Heart right ventricle (tissue), 16 donors: ENCODE measurements at regions of chr10 and their contacts with region 1.

Region 1: GRCh38 chr10:110007701-110008517 is at the start of gene ADD3:
- DNase-seq: peak; percentile 96 to 98
- ATAC-seq: peak; percentile 91 to 97 (median 93)
- H3K4me3 ChIP-seq: peak within 1 kb of the TSS; percentile 87 to 99 (median 96)
- H3K27ac ChIP-seq: peak within 1 kb of the TSS; percentile 89 to 99 (median 96)
- H3K4me1 ChIP-seq: peaks cover 0 to 78% (median 63%) of the 10 kb centered on the region in 9 donors
- H3K27me3 ChIP-seq: no peaks in the 10 kb centered on the region
- CTCF ChIP-seq: no peak
- total RNA-seq, gene ADD3: 62.5 to 106 (median 89.5) TPM

Region 2: GRCh38 chr10:109922976-109923921 is 84.7 kb before region 1 on chr10 and contains the start of gene XPNPEP1:
- intact Hi-C with region 1: loop called in 5 of 10 experiments (anchors 2 to 10 kb)
- DNase-seq: peak; percentile 89 to 90
- ATAC-seq: peak; percentile 96 to 99 (median 98)
- H3K4me3 ChIP-seq: peak within 1 kb of the TSS; percentile 71 to 99 (median 92)
- H3K27ac ChIP-seq: peak within 1 kb of the TSS; percentile 81 to 99 (median 97)
- H3K4me1 ChIP-seq: peaks cover 3 to 47% (median 21%) of the 10 kb centered on the region in 9 donors
- H3K27me3 ChIP-seq: no peaks in the 10 kb centered on the region
- CTCF ChIP-seq: no peak
- total RNA-seq, gene XPNPEP1: 35.8 to 51.6 (median 43.5) TPM

Region 3: GRCh38 chr10:110022716-110023504 is 15.0 kb after region 1 on chr10:
- intact Hi-C with region 1: no loop called
- DNase-seq: no peak
- ATAC-seq: peak in 3 of 8 donors; percentile 15 to 37 (median 24)
- H3K4me3 ChIP-seq: no peak overlapping the region
- H3K27ac ChIP-seq: peak overlapping the region in 5 of 10 donors; percentile 10 to 49 (median 24)
- H3K4me1 ChIP-seq: peaks cover 0 to 60% (median 32%) of the 10 kb centered on the region in 9 donors
- H3K27me3 ChIP-seq: no peaks in the 10 kb centered on the region
- CTCF ChIP-seq: no peak

Region 4: DNA sequence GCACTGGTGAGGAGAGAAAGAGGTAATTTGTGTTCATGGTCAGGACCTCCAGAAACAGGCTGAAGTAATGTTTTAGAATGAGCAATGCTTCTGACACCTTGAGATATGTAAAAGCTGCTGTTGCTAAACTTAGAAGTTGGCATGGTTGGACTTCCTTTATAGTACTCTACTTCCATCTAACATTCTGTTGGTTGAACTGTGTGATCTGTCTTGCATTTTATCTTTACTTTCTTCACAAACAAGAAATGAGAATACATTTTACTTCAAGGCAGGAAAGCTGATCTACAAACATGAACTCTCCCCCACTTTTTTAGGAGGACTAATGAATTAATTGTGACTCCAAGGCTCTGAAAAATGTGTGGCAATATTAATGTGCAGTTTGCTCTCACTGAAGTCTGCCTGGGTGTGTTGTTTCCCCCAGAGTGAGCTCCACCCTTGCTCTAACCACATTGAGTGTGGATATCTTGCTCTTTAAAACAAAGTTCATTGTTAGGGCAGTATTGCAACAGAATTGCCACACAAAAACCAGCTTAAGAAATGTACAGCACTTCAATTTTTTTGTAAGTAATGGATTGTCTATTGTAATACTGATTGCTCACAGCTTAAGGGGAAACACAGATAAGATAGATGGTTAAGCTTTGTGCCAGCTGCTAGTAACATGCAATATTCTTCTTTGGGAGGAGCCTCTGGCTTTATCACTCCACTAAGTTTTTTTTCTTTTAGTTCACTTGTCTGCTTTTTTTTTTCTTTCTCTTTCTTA is 68.8 kb after region 1 on chr10:
- intact Hi-C with region 1: loop called in 5 of 10 experiments (anchors 5 to 10 kb)
- DNase-seq: peak in 1 of 2 donors; percentile 44
- ATAC-seq: peak; percentile 69 to 91 (median 83)
- H3K4me3 ChIP-seq: peak overlapping the region in 7 of 10 donors; percentile 16 to 37 (median 29)
- H3K27ac ChIP-seq: peak overlapping the region; percentile 24 to 92 (median 82)
- H3K4me1 ChIP-seq: peaks cover 2 to 96% (median 86%) of the 10 kb centered on the region in 9 donors
- H3K27me3 ChIP-seq: no peaks in the 10 kb centered on the region
- CTCF ChIP-seq: no peak

Region 5: DNA sequence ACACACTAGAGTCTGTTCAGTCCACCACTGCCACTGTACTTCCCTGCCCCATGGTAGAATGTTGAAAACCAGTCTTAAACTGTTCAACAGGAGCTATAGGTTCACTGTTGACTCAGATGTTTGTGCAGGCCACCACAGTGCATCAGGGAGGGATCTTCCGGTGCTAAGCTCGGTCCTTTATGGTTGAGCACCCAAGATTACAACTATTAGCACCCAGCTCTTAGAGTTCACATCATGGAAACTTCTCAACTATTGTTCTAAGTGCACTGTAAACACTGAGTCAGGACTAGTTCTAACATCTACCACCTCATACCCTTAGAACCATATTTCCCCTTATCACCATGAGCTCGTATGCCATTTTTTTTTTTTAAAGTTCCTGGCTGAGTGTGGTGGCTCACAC is 102.4 kb after region 1 on chr10:
- intact Hi-C with region 1: loop called in 5 of 10 experiments (anchors 5 to 10 kb)
- DNase-seq: no peak
- ATAC-seq: peak in 1 of 8 donors; percentile 34
- H3K4me3 ChIP-seq: no peak overlapping the region
- H3K27ac ChIP-seq: no peak overlapping the region
- H3K4me1 ChIP-seq: peaks cover 0 to 18% (median 5%) of the 10 kb centered on the region in 9 donors
- H3K27me3 ChIP-seq: no peaks in the 10 kb centered on the region
- CTCF ChIP-seq: no peak

Region 6: DNA sequence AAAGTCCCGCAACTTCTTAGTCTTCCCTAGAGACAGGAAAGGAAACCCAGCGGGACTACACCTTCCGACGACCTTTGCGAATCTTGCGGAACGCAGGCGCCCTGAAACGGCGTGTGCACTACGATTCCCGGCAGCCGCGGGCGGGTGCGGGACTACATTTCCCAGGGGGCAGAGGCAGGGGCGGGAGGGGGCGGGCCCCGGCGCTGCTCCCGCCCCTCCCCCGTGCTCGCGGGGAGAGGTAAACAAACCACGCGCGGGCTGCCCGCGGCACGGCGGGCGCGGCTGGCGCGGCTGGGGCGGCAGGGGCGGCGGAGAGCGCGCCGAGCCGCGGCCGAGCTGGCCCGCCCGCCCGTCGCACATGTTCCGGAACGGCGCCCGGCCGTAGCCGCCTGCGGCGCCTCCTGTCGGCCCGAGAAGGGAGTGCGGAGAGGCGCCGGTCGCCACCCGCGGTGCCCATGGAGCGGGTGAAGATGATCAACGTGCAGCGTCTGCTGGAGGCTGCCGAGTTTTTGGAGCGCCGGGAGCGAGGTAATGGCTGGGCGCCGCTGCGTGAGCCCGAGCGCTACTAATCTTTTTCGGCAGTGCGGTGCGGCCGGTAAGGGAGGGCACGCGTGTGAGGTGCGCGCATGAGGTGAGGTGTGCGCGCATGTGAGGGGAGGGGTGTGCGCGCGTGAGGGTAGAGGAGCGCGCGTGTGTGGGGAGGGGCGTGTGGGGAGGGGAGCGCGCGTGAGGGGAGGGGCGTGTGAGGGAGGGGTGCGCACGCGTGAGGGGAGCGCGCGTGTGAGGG is 218.0 kb after region 1 on chr10:
- intact Hi-C with region 1: loop called in 2 of 10 experiments (anchors 10 kb)
- DNase-seq: peak; percentile 92 to 93
- ATAC-seq: peak; percentile 67 to 85 (median 72)
- H3K4me3 ChIP-seq: peak overlapping the region; percentile 64 to 99 (median 81)
- H3K27ac ChIP-seq: peak overlapping the region; percentile 85 to 93 (median 88)
- H3K4me1 ChIP-seq: peaks cover 7 to 60% (median 45%) of the 10 kb centered on the region in 9 donors
- H3K27me3 ChIP-seq: no peaks in the 10 kb centered on the region
- CTCF ChIP-seq: peak; percentile 54 to 85 (median 71)

Region 7: DNA sequence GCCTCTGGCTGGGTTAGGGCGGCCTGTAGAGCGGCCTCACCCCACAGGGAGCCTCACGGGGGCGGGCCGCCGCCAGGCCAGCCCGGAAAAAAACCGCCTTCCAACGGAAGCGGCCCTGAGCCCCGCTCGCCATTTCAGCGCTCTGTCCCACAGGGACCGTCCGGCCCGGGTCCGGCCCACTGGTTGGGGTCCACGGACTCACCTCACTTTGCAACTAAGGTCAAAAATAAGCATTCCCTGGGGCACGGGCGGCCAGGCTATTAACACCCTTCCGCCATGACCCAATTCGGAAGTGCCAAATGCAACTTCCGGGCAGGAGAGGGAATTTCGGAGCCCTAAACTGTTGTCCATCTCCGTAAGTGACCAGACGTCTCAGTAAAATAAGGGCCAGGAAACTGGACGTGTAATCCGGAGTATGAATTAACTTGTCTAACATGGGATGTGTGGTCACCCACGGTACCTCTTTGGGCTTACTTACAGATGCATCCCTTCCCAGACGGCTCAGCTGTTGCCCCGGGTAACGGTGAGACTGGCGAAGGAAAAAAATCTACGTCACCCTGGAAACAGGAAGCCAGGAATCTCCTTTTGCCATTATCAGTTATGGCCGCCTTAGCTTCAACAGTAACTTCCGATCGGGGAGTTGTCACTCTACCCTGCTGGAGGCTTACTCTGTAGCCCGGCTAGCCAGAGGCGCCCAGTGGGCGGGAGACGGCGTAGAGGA is 910.9 kb after region 1 on chr10 and contains the start of gene BBIP1:
- intact Hi-C with region 1: loop called in 1 of 10 experiments (anchors 10 kb)
- DNase-seq: no peak
- ATAC-seq: peak; percentile 95 to 98 (median 96)
- H3K4me3 ChIP-seq: peak within 1 kb of the TSS; percentile 59 to 79 (median 70)
- H3K27ac ChIP-seq: peak within 1 kb of the TSS; percentile 93 to 99 (median 97)
- H3K4me1 ChIP-seq: peaks cover 7 to 54% (median 40%) of the 10 kb centered on the region in 9 donors
- H3K27me3 ChIP-seq: no peaks in the 10 kb centered on the region
- CTCF ChIP-seq: peak in 2 of 9 donors; percentile 1 to 27
- total RNA-seq, gene BBIP1: 16.6 to 30.7 (median 23.8) TPM